ENCODE measurements at regions of chr2 and their contacts with region 1.

Region 1: DNA sequence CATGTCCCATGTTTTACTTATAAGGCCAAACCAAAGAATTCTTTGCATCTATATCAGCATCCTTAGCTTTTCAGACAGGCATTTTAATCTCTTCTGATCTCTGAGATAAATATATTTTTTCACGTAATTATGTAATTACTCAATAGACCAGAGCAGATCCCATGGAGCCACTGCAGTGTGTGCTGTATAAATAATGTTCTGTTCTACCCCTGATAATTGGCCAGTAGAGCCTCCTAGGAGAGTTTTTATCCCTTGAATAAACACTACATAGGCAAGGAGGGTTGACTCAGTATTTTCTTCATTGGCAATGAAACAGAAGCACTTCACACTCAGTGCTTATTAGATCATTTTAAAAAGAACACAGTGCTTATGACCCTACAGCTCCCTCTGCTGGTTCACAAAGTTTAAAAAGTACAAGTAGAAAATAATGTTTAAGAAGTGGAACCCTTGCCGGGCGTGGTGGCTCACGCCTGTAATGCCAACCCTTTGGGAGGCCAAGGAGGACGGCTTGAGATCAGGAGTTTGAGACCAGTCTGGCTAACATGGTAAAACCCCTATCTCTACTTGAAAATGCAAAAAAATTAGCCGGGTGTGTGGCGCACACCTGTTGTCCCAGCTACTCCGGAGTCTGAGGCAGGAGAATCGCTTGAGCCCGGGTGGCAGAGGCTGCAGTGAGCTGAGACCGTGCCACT is 91.9 kb downstream of the PPP1R1C start:
- DNase-seq: peak; percentile 14
- ATAC-seq: peak; percentile 82
- H3K4me3 Mint-ChIP-seq: no peak overlapping the region
- H3K27ac Mint-ChIP-seq: no peak overlapping the region
- H3K4me1 Mint-ChIP-seq: peaks cover 8% of the 10 kb centered on the region
- H3K27me3 Mint-ChIP-seq: no peaks in the 10 kb centered on the region
- CTCF ChIP-seq: peak; percentile 43

Region 2: GRCh38 chr2:181823405-181823804 is 254.2 kb before region 1 on chr2:
- CTCF ChIA-PET with region 1: no interaction called
- POLR2A ChIA-PET with region 1: no interaction called
- DNase-seq: no peak
- ATAC-seq: no peak
- H3K4me3 Mint-ChIP-seq: no peak overlapping the region
- H3K27ac Mint-ChIP-seq: no peak overlapping the region
- H3K4me1 Mint-ChIP-seq: peaks cover 8% of the 10 kb centered on the region
- H3K27me3 Mint-ChIP-seq: no peaks in the 10 kb centered on the region
- CTCF ChIP-seq: no peak

Region 3: DNA sequence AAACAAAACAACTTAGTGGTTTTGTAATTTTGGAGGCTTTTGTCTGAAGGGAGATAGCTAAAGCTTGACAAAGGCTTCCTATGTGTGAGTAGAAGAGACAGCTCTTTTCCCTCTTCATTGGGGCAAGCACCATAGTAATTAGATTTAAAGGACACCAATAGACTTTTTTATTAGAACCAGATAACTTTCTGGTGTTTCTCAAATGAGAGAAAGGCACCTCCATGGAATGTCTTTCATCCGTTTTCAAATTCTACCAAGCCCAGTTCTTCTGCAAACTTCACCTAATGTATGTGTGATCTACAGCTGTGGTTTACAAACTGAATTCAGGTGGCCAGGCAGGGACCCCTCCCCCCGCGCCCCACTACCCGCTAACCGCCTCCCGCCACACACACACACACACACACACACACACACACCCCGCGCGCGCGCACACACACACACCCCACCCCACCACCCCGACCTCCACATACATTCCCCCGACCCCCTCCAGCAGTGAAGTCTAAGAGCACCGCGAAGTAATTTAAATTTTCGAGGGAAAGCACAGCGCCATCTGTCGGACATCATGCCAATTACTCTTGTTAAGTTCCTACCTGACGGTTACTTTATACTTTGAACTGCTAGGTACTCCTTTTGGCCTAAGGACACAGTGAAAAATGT is 123.6 kb before region 1 on chr2:
- CTCF ChIA-PET with region 1: interaction called, 12 read pairs
- POLR2A ChIA-PET with region 1: no interaction called
- DNase-seq: peak; percentile 81
- ATAC-seq: peak; percentile 93
- H3K4me3 Mint-ChIP-seq: peak overlapping the region; percentile 57
- H3K27ac Mint-ChIP-seq: no peak overlapping the region
- H3K4me1 Mint-ChIP-seq: peaks cover 9% of the 10 kb centered on the region; the same call in 1 of the 2 replicates
- H3K27me3 Mint-ChIP-seq: no peaks in the 10 kb centered on the region
- CTCF ChIP-seq: peak; percentile 37; the same call in 1 of the 2 replicates

Region 4: DNA sequence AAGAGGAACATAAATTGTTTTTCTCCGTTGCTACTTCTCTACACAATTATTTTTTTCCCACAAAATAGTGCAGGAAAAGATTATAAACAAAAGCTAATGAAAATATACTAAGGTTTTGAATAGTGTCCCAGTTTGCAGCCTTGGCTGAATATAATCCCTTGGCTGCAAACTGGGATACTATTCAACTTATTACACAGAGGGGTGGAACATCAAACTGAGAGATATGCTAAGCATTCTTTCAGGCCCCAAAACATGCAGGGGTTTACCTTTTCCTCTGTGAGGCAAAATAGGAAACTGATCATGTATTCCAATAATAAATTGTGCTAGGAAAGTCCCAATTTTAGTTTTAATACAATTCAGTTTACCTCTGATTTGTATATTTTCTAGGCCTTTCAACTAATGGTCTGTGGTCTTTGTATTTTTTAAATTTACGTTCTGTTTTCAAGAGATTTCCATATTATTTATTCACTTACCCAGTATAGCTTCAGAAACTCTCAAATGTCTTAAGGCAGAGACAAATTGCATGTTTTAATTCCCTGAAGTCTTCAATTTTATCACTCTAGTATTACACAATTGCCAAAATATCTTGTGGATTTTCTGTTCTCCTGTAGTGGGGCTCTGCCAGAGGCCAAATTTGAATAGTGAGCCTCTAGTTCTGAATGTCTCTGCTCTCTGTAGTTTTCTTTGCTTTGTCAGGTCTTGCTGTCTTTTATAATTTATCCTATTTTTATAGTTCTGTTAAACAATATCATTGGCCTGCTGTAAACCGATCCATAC is 28.0 kb before region 1 on chr2:
- CTCF ChIA-PET with region 1: no interaction called
- POLR2A ChIA-PET with region 1: no interaction called
- DNase-seq: no peak
- ATAC-seq: no peak
- H3K4me3 Mint-ChIP-seq: no peak overlapping the region
- H3K27ac Mint-ChIP-seq: no peak overlapping the region
- H3K4me1 Mint-ChIP-seq: peaks cover 9% of the 10 kb centered on the region
- H3K27me3 Mint-ChIP-seq: no peaks in the 10 kb centered on the region
- CTCF ChIP-seq: no peak